Activated CD4-positive, alpha-beta memory T cell treated with anti-CD3 and anti-CD28 coated beads for 36 hours (primary cell): ENCODE measurements at regions of chr1 and their contacts with region 1.

Region 1: DNA sequence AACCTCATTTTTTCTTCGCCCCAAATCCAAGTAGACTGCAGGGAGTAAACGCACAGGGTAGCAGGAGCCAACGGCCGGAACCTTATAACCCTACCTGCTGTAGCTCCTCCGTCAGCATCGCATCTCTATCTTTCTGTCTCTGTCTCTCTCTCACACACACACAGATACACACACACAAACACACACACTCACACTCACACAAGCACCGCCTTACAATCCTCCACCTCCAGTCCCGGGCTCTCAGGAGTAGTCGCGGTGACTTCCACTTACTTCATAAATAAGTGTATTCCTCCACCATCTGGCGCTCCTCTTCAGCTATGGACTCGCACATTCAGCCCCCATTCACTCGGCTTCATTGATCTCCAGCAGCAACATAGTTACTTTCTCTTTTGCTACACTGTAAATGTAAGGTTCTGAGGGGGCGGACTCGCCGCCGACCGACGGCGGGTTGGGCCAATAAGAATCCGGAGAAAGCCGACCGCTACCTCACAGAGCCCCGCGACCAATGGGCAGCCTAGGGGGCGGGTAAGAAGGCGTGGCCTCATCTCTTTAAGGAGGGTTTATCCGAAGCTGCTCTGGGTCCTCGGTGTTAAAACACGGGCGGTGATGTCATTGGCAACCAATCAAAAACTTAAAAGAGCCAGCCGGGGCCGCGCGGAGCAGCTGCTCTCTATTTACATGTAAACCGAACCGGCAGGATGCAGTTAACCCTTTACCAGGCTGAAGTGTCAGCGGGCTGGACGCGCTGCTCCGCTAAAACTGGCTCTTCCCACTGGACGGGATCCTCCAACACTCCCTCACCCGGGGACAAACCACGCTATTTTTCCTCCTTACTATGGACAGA is at the start of gene DUSP10:
- DNase-seq: peak; percentile 99
- H3K4me3 Mint-ChIP-seq: no peak within 1 kb of the TSS
- H3K27ac Mint-ChIP-seq: peak within 1 kb of the TSS; percentile 64
- H3K4me1 Mint-ChIP-seq: peaks cover 37% of the 10 kb centered on the region
- H3K27me3 Mint-ChIP-seq: no peaks in the 10 kb centered on the region
- total RNA-seq, gene DUSP10: 8.8 to 8.9 TPM

Region 2: GRCh38 chr1:221543529-221544120 is 198.3 kb before region 1 on chr1:
- CTCF ChIA-PET with region 1: interaction called, 10 read pairs
- POLR2A ChIA-PET with region 1: no interaction called
- intact Hi-C with region 1: loop called (anchors 5 kb)
- DNase-seq: no peak
- H3K4me3 Mint-ChIP-seq: no peak overlapping the region
- H3K27ac Mint-ChIP-seq: no peak overlapping the region
- H3K4me1 Mint-ChIP-seq: no peaks in the 10 kb centered on the region
- H3K27me3 Mint-ChIP-seq: peaks cover 10% of the 10 kb centered on the region

Region 3: GRCh38 chr1:221753828-221754188 is 11.9 kb after region 1 on chr1:
- CTCF ChIA-PET with region 1: interaction called, 3 read pairs
- POLR2A ChIA-PET with region 1: interaction called, 12 read pairs
- intact Hi-C with region 1: loop called (anchors 1 kb)
- DNase-seq: no peak
- H3K4me3 Mint-ChIP-seq: no peak overlapping the region
- H3K27ac Mint-ChIP-seq: peak overlapping the region; percentile 19
- H3K4me1 Mint-ChIP-seq: peaks cover 33% of the 10 kb centered on the region
- H3K27me3 Mint-ChIP-seq: no peaks in the 10 kb centered on the region

Region 4: DNA sequence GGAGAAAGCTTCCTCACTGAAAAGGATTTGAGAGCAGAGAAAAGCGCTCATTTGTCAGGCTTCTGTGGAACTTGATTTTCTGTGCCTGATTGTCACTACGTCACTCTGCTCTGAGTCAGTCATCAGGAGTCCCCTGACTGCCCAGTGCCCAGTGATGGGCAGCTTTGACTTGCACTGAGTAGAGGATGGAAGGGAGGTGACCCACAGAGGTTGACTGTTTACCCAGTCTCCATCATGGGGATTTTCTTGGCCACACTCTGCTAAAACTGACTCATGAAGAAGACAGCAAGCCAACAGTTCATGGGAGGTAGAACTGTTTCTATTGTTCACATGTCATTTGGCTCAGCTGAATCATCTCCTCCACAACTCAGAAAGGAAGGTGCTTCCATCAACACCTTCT is 82.1 kb after region 1 on chr1:
- CTCF ChIA-PET with region 1: interaction called, 5 read pairs
- POLR2A ChIA-PET with region 1: interaction called, 9 read pairs
- intact Hi-C with region 1: loop called (anchors 1 kb)
- DNase-seq: peak; percentile 71
- H3K4me3 Mint-ChIP-seq: no peak overlapping the region
- H3K27ac Mint-ChIP-seq: peak overlapping the region; percentile 50
- H3K4me1 Mint-ChIP-seq: peaks cover 55% of the 10 kb centered on the region
- H3K27me3 Mint-ChIP-seq: no peaks in the 10 kb centered on the region

Region 5: GRCh38 chr1:221994274-221994698 is 252.4 kb after region 1 on chr1:
- CTCF ChIA-PET with region 1: interaction called, 3 read pairs
- POLR2A ChIA-PET with region 1: interaction called, 7 read pairs
- intact Hi-C with region 1: loop called (anchors 1 kb)
- DNase-seq: peak; percentile 60
- H3K4me3 Mint-ChIP-seq: no peak overlapping the region
- H3K27ac Mint-ChIP-seq: peak overlapping the region; percentile 97
- H3K4me1 Mint-ChIP-seq: peaks cover 38% of the 10 kb centered on the region
- H3K27me3 Mint-ChIP-seq: peaks cover 2% of the 10 kb centered on the region

Region 6: DNA sequence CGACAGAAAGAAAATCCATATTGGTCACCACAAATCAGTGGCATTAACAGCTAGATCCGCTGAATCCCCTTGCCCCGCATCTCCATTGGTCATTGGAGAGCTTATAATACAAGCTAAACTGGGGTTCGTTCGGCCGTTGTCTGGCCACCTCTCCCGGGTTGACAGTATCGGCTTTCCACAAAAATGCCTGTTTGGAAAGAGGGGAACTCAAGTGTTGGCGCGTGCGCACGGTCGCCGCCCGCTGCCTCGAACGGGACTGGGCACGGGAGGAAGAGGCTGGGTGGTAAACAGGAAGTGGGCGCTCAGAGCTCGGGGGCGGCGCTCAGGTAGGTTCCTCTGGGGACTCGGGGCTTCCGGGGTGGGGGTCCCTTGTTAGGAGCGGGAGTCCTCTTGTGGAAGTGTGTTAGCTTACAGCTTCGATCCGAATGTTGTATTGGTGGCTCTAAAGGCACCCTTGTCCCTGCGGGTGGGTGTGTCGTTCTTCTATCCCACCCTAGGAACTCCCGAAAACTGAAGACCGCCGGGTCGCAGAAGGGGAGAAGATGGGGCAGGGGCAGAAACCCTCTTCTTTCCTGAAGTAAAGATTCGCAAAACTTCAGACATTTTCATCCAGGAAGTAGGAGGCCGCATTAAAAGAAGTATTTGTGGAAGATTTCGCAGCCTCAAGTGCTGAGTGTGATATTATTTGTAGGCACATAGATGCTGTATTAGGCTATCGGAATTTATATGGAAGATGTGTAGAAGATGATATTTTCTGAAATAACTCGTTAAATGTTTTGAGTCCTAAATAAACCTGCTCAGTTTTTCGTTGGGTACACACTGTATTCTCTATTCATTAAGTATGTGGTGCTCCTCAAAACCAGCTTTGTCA is 971.4 kb after region 1 on chr1:
- CTCF ChIA-PET with region 1: no interaction called
- POLR2A ChIA-PET with region 1: no interaction called
- intact Hi-C with region 1: loop called (anchors 5 kb)
- DNase-seq: peak; percentile 94
- H3K4me3 Mint-ChIP-seq: peak overlapping the region; percentile 97
- H3K27ac Mint-ChIP-seq: peak overlapping the region; percentile 98
- H3K4me1 Mint-ChIP-seq: peaks cover 47% of the 10 kb centered on the region
- H3K27me3 Mint-ChIP-seq: no peaks in the 10 kb centered on the region